ENCODE measurements at regions of chr3 and their contacts with region 1.

Region 1: GRCh38 chr3:128133273-128134084 is 9.9 kb upstream of the RUVBL1 start:
- DNase-seq: peak in 6 of 7 donors; percentile 46 to 65 (median 58)
- H3K4me3 ChIP-seq: no peak overlapping the region
- H3K27ac ChIP-seq: no peak overlapping the region
- H3K4me1 ChIP-seq: no peaks in the 10 kb centered on the region
- H3K27me3 ChIP-seq: no peaks in the 10 kb centered on the region
- CTCF ChIP-seq: peak; percentile 41 to 87 (median 79)
- POLR2A ChIP-seq: no peak

Region 2: DNA sequence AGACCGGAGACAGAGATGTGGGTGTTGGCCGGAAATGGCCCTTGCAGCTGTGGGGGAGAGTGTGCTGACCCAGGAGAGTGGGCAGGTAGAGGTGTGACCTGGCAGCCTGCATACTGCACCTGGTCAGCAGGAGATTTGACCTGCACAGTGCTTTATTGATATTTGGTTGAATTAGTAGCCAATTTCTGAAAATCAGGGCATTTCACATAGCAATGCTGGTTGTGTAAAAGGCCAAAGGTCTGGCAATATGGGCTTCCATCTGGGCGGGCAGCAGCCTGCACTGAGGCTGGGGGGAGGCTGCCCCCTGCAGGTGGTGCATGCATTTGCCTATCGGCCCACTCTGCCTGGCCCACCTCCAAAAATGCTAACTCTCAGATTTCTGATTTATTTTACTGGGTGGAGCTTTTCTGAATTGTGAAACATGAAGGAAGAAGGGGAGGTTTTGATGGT is 301.7 kb before region 1 on chr3:
- intact Hi-C with region 1: no loop called
- DNase-seq: peak in 6 of 7 donors; percentile 41 to 73 (median 64)
- H3K4me3 ChIP-seq: no peak overlapping the region
- H3K27ac ChIP-seq: no peak overlapping the region
- H3K4me1 ChIP-seq: no peaks in the 10 kb centered on the region
- H3K27me3 ChIP-seq: no peaks in the 10 kb centered on the region
- CTCF ChIP-seq: peak; percentile 30 to 73 (median 60)
- POLR2A ChIP-seq: no peak

Region 3: GRCh38 chr3:128095222-128095703 is 38.2 kb before region 1 on chr3:
- intact Hi-C with region 1: loop called (anchors 5 kb)
- DNase-seq: peak; percentile 83 to 94 (median 88)
- H3K4me3 ChIP-seq: no peak overlapping the region
- H3K27ac ChIP-seq: no peak overlapping the region
- H3K4me1 ChIP-seq: no peaks in the 10 kb centered on the region
- H3K27me3 ChIP-seq: no peaks in the 10 kb centered on the region
- CTCF ChIP-seq: peak; percentile 78 to 93 (median 84)
- POLR2A ChIP-seq: no peak